ENCODE measurements at regions of chrX and their contacts with region 1.

Region 1: GRCh38 chrX:42943051-42943974 is 165.3 kb upstream of the PPP1R2C start:
- DNase-seq: peak; percentile 54 to 68 (median 66)
- H3K4me3 ChIP-seq: no peak overlapping the region
- H3K4me3 Mint-ChIP-seq: peak overlapping the region in 7 of 8 donors; percentile 45 to 81 (median 72)
- H3K27ac ChIP-seq: peak overlapping the region; percentile 64
- H3K27ac Mint-ChIP-seq: peak overlapping the region; percentile 87 to 96 (median 94)
- H3K4me1 ChIP-seq: peaks cover 89% of the 10 kb centered on the region
- H3K4me1 Mint-ChIP-seq: peaks cover 42 to 96% (median 84%) of the 10 kb centered on the region in 4 donors
- H3K27me3 ChIP-seq: no peaks in the 10 kb centered on the region
- H3K27me3 Mint-ChIP-seq: no peaks in the 10 kb centered on the region

Region 2: DNA sequence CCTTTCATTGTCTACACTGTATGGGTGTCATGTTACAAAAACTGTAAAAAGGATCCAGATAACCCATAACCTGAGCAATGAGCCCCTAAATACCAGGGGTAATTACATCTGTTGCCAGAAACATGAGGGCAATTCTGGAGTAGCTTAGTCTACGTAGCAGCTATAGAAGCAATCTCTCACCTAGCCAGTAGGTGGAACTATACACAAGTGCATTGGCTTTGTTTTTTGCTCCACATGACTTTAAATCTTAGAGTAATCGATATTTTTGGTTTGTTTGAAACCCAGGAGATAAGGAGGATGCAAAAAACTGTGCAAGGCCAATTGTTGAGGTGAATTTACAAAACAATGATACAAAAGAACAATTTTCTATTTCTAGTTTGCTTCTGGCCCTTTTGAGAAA is 1161.8 kb before region 1 on chrX:
- CTCF ChIA-PET with region 1: interaction called, 3 read pairs
- POLR2A ChIA-PET with region 1: no interaction called
- intact Hi-C with region 1: loop called (anchors 5 kb)
- DNase-seq: peak in 4 of 5 donors; percentile 28 to 38 (median 32)
- H3K4me3 ChIP-seq: no peak overlapping the region
- H3K4me3 Mint-ChIP-seq: no peak overlapping the region
- H3K27ac ChIP-seq: no peak overlapping the region
- H3K27ac Mint-ChIP-seq: peak overlapping the region in 2 of 7 donors; percentile 2 to 7
- H3K4me1 ChIP-seq: peaks cover 12% of the 10 kb centered on the region
- H3K4me1 Mint-ChIP-seq: peaks cover 7 to 10% (median 8%) of the 10 kb centered on the region in 4 donors
- H3K27me3 ChIP-seq: no peaks in the 10 kb centered on the region
- H3K27me3 Mint-ChIP-seq: no peaks in the 10 kb centered on the region

Region 3: DNA sequence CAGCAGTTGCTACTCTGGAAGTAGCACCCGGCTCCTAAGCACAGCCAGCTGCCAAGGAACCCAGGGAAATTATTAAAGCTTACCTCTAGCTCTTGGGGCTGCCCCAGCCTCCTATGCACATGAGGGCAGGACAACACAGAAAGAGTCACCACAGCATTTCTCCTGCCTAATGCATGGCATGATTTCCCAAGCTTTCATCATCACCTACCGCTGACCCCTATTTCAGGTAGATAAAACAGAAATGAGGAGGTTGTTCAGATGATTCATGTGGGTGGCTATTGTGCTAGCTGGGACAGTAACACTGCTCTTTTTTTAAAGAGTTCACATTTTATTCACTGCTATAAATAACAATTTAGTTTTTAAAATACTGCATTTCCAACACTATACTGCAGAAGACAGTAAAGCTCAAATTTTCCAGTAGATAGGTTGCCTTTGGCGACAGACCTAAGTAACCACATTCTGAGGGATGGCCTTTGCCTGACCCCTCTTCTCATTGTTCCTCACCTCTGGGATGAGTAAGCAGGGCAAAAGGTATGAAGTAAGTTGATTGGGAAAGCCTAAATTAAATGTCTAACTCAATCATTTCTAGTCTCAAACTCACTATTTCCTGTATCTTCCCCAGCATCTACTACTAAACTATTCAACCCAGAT is 1036.7 kb before region 1 on chrX:
- CTCF ChIA-PET with region 1: no interaction called
- POLR2A ChIA-PET with region 1: no interaction called
- intact Hi-C with region 1: loop called (anchors 5 kb)
- DNase-seq: no peak
- H3K4me3 ChIP-seq: no peak overlapping the region
- H3K4me3 Mint-ChIP-seq: peak overlapping the region in 1 of 8 donors; percentile 81
- H3K27ac ChIP-seq: no peak overlapping the region
- H3K27ac Mint-ChIP-seq: peak overlapping the region in 3 of 7 donors; percentile 5 to 75 (median 19)
- H3K4me1 ChIP-seq: peaks cover 42% of the 10 kb centered on the region
- H3K4me1 Mint-ChIP-seq: peaks cover 27 to 69% (median 49%) of the 10 kb centered on the region in 4 donors
- H3K27me3 ChIP-seq: no peaks in the 10 kb centered on the region
- H3K27me3 Mint-ChIP-seq: no peaks in the 10 kb centered on the region

Region 4: GRCh38 chrX:42615161-42615563 is 328.2 kb before region 1 on chrX:
- CTCF ChIA-PET with region 1: interaction called, 4 read pairs
- POLR2A ChIA-PET with region 1: no interaction called
- intact Hi-C with region 1: loop called (anchors 5 kb)
- DNase-seq: peak in 2 of 5 donors; percentile 4 to 23
- H3K4me3 ChIP-seq: no peak overlapping the region
- H3K4me3 Mint-ChIP-seq: no peak overlapping the region
- H3K27ac ChIP-seq: no peak overlapping the region
- H3K27ac Mint-ChIP-seq: no peak overlapping the region
- H3K4me1 ChIP-seq: peaks cover 8% of the 10 kb centered on the region
- H3K4me1 Mint-ChIP-seq: peaks cover 5 to 23% (median 16%) of the 10 kb centered on the region in 4 donors
- H3K27me3 ChIP-seq: no peaks in the 10 kb centered on the region
- H3K27me3 Mint-ChIP-seq: no peaks in the 10 kb centered on the region

Region 5: DNA sequence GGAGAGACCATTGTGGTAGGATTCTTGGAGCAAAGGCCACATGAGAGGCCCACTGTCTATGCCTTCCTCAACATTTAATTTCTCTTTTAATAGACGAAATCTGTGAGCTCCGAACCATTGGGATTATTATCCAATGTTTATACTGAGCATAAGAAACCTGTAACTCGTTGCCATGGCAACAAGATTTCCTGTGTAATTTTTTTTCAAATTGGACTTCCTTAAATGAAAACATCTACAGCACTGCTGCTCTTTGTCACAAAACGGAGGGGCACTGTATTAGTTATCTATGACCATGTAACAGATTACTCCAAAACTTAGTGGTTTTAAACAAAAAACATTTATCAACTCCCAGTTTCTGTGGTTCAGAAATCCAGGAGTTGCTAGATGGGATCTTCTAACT is 204.1 kb before region 1 on chrX:
- CTCF ChIA-PET with region 1: no interaction called
- POLR2A ChIA-PET with region 1: no interaction called
- intact Hi-C with region 1: loop called (anchors 5 kb)
- DNase-seq: peak in 4 of 5 donors; percentile 27 to 46 (median 40)
- H3K4me3 ChIP-seq: no peak overlapping the region
- H3K4me3 Mint-ChIP-seq: peak overlapping the region; percentile 44 to 73 (median 66)
- H3K27ac ChIP-seq: no peak overlapping the region
- H3K27ac Mint-ChIP-seq: peak overlapping the region; percentile 69 to 92 (median 88)
- H3K4me1 ChIP-seq: peaks cover 15% of the 10 kb centered on the region
- H3K4me1 Mint-ChIP-seq: peaks cover 9 to 22% (median 11%) of the 10 kb centered on the region in 4 donors
- H3K27me3 ChIP-seq: no peaks in the 10 kb centered on the region
- H3K27me3 Mint-ChIP-seq: no peaks in the 10 kb centered on the region

Region 6: GRCh38 chrX:43148305-43148704 is 205.0 kb after region 1 on chrX:
- CTCF ChIA-PET with region 1: no interaction called
- POLR2A ChIA-PET with region 1: no interaction called
- intact Hi-C with region 1: no loop called
- DNase-seq: no peak
- H3K4me3 ChIP-seq: no peak overlapping the region
- H3K4me3 Mint-ChIP-seq: no peak overlapping the region
- H3K27ac ChIP-seq: no peak overlapping the region
- H3K27ac Mint-ChIP-seq: no peak overlapping the region
- H3K4me1 ChIP-seq: no peaks in the 10 kb centered on the region
- H3K4me1 Mint-ChIP-seq: peaks cover 6 to 14% (median 10%) of the 10 kb centered on the region in 4 donors
- H3K27me3 ChIP-seq: no peaks in the 10 kb centered on the region
- H3K27me3 Mint-ChIP-seq: no peaks in the 10 kb centered on the region

Measured in CD4-positive, alpha-beta memory T cell (primary cell).